GM13977 (cell line): ENCODE measurements at regions of chr6 and their contacts with region 1.

Region 1: GRCh38 chr6:487956-488355 is 96.4 kb downstream of the IRF4 start:
- DNase-seq: no peak
- CTCF ChIP-seq: no peak

Region 2: GRCh38 chr6:356828-357251 is 131.1 kb before region 1 on chr6:
- in situ Hi-C with region 1: no loop called
- DNase-seq: peak; percentile 92
- CTCF ChIP-seq: no peak

Region 3: GRCh38 chr6:411421-412145 is 76.4 kb before region 1 on chr6:
- in situ Hi-C with region 1: loop called (anchors 5 kb)
- DNase-seq: no peak
- CTCF ChIP-seq: no peak

Region 4: DNA sequence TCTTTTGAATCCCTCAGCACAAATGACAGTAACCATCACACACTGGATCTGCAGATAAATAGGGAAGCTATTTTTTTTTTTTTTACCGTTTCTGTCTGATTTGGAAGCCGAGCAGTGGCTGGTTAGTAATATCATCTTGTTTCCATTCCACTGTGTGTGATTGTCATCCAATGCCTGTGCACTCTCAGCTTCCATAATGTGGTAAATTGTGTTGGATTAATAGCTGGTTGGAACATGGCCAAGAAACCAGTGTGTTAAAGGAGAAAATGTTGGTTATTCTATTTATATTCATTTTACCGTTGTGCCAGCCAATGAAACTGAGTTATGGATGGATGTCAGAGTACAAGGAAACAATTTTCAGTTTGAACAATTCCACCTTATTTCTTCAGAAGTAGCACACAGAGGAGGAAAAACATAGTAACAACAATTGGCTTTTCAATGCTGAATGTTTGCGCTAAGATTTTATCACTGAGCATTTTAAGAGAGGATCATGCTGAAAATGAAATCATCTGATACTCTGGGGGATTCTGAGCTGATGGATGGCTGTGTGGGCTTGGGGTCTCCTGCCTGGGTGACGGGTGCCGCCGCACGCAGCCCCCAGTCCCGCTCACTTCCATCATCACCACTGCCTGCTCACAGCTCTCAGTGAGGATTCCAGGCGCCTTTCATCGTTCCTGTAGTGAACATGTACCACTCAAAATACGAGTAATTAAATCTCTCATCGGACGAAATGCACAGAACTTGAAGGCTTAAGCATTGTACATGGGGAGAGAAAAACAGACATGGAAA is 245.7 kb after region 1 on chr6:
- in situ Hi-C with region 1: no loop called
- DNase-seq: no peak
- CTCF ChIP-seq: no peak